IMR-90 (cell line): ENCODE measurements at regions of chr12 and their contacts with region 1.

Region 1: GRCh38 chr12:99043319-99043914 is 398.3 kb downstream of the APAF1 start:
- DNase-seq: peak; percentile 64
- ATAC-seq: peak; percentile 81
- H3K4me3 ChIP-seq: no peak overlapping the region
- H3K27ac ChIP-seq: no peak overlapping the region
- H3K4me1 ChIP-seq: no peaks in the 10 kb centered on the region
- H3K27me3 ChIP-seq: no peaks in the 10 kb centered on the region
- CTCF ChIP-seq: peak; percentile 82
- POLR2A ChIP-seq: no peak
- RAD21 ChIP-seq: peak; percentile 75

Region 2: DNA sequence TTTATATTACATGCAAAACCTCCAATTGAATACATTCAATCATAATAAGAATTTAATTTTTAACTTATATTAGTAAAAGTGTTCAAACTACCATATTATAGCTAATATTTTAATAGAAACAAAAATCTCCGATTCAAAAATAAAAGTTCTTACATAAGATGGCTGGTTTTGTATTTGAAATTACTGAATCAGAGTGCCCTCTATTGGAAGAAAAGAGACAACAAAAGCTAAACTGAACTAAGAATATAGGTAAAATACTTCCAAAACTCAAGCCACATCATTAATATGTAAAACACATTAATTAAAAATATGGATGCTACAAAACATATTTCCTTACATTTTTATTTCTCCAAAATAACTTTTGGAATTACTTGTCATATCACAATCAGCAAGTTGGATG is 724.4 kb after region 1 on chr12:
- CTCF ChIA-PET with region 1: interaction called, 11 read pairs
- POLR2A ChIA-PET with region 1: no interaction called
- dilution Hi-C with region 1: no loop called
- in situ Hi-C with region 1: loop called (anchors 10 kb)
- intact Hi-C with region 1: loop called (anchors 1 kb)
- DNase-seq: peak; percentile 11
- ATAC-seq: no peak
- H3K4me3 ChIP-seq: no peak overlapping the region
- H3K27ac ChIP-seq: no peak overlapping the region
- H3K4me1 ChIP-seq: no peaks in the 10 kb centered on the region
- H3K27me3 ChIP-seq: no peaks in the 10 kb centered on the region
- CTCF ChIP-seq: peak; percentile 51
- POLR2A ChIP-seq: no peak
- RAD21 ChIP-seq: no peak; the same call in 1 of the 2 replicates